ENCODE measurements at regions of chr18 and their contacts with region 1.

Region 1: DNA sequence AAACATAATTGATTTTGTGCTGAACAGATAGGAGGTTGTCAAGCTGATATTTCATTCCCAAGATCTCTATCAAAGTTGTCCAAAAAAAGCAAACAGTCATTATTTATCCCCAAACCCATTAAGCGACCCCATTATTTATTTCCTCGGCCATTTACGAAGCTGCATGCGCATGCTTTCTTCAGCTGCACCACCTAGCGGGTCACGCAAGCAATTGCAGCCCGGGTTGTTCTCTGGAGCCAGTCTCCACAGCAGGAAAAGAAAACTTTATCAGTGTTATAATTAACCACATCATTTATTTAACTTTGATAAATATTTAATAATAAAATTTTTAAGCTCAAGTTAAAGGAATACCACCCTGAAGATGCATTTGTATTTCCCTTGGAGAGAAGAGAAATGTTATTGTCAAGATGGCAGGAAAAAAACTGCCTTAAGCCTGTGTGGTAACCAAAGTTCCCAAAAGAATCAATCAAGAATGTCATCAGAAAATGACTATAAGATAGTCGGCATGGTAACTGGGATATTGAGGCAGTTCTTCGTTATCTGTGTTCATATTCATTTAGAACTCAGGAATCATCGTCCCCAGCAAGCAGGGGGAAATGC is 304.7 kb downstream of the FBXO15 start:
- H3K4me3 ChIP-seq: no peak overlapping the region
- H3K27ac ChIP-seq: no peak overlapping the region
- H3K4me1 ChIP-seq: no peaks in the 10 kb centered on the region
- CTCF ChIP-seq: peak; percentile 33

Region 2: DNA sequence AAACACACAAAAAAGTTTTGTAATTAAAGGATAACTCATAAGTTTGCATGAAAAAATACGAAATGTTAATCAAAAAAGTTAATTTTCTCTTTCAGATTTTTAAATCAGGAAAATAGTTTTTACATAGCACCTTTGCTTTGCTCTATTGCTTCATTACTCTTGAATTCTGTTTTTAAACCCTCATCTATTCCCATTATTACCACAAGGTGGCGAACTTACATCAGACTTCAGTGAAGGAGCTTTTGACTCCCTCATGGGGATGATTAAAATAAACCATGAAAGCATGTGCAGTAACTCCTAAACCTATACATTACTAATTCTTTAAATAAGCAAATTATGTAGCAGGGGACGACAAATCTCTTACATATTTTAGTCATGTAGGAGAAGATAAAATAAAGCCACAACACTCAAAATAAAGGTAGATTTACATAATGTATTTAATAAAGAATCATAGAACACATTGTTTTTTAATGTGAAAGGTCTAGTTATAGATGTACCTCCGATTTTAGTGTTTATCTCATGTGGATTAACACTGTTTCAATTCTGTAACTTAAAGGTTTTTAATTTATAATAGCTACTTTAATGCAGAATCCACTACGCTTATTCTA is 1080.3 kb before region 1 on chr18:
- CTCF ChIA-PET with region 1: interaction called, 10 read pairs
- POLR2A ChIA-PET with region 1: no interaction called
- H3K4me3 ChIP-seq: no peak overlapping the region
- H3K27ac ChIP-seq: no peak overlapping the region
- H3K4me1 ChIP-seq: no peaks in the 10 kb centered on the region
- CTCF ChIP-seq: no peak

Region 3: GRCh38 chr18:73831688-73832087 is 11.2 kb before region 1 on chr18:
- CTCF ChIA-PET with region 1: interaction called, 10 read pairs
- POLR2A ChIA-PET with region 1: no interaction called
- H3K4me3 ChIP-seq: no peak overlapping the region
- H3K27ac ChIP-seq: no peak overlapping the region
- H3K4me1 ChIP-seq: no peaks in the 10 kb centered on the region
- CTCF ChIP-seq: no peak

Region 4: DNA sequence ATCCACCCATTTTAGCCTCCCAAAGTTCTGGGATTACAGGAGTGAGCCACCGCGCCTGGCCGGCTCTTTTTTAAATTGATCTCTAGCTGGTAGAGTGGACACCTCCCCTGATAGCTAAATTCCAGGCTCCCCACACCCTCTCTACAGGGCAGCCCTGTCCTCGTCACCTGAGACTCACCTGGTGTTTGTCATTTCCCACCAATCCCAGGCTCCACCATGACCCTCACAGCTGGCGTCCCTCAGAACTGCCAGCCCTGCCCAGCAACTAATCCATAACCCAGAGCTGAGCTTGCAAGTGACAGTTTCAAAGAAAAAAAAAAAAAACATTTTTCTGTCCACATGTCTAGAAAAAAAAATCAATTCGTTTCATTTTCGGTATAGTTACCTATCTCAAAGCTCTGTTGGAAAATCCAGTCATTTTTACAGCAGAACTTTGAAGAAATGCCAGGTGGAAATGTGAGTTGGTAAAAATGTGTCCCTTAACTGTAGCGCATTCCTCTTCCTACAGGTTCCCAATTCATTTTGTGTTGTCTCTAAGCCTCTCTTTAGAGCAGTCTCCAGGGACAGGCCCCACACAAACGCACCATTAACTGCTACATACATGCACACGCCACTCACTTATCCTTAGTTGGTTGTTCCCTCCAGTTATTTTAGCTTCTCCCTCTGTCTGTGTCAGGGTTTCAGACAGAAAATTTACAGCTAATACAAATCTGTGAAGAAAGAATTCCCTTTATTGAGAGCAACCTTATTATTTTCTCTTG is 10.1 kb after region 1 on chr18:
- CTCF ChIA-PET with region 1: interaction called, 18 read pairs
- POLR2A ChIA-PET with region 1: no interaction called
- H3K4me3 ChIP-seq: no peak overlapping the region
- H3K27ac ChIP-seq: no peak overlapping the region
- H3K4me1 ChIP-seq: no peaks in the 10 kb centered on the region
- CTCF ChIP-seq: no peak

Region 5: GRCh38 chr18:74204526-74205152 is 361.7 kb after region 1 on chr18:
- CTCF ChIA-PET with region 1: no interaction called
- POLR2A ChIA-PET with region 1: no interaction called
- H3K4me3 ChIP-seq: no peak overlapping the region
- H3K27ac ChIP-seq: no peak overlapping the region
- H3K4me1 ChIP-seq: no peaks in the 10 kb centered on the region
- CTCF ChIP-seq: no peak

Measured in HEK293 (cell line).